ENCODE measurements at regions of chr2 and their contacts with region 1.

Region 1: DNA sequence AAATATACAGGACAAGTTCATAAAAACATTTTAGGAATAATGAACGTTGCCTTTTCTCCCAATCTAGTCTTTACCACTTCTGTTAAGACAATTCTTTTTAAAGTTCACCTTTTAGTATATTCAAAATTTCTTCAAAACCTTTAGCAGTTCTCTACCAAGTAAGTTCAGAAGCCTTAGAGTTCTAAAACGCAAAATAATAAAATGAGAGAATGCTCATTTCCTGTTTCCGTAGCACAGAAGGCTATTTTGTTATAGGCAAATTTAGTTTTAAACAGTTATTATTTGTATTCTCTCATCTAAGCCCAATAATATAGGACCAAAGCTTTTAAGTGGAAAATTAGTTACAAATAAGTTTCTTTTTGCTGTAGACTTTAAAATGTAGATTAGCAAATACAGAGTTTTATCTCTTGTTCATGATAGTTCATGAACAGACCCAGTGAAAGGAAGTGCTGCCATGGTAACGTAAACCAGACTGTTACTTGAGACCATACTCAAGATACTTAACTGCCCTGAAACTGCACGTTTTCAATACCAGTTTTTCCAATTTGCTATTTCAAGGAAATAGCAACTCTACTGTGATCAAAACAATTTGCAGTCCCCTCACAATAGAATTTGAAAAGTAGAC is 173.1 kb upstream of the STON1 start:
- DNase-seq: no peak
- ATAC-seq: peak; percentile 75
- H3K4me3 Mint-ChIP-seq: peak overlapping the region; percentile 55
- H3K27ac Mint-ChIP-seq: peak overlapping the region; percentile 83
- H3K4me1 Mint-ChIP-seq: peaks cover 61% of the 10 kb centered on the region
- H3K27me3 Mint-ChIP-seq: no peaks in the 10 kb centered on the region
- CTCF ChIP-seq: no peak

Region 2: DNA sequence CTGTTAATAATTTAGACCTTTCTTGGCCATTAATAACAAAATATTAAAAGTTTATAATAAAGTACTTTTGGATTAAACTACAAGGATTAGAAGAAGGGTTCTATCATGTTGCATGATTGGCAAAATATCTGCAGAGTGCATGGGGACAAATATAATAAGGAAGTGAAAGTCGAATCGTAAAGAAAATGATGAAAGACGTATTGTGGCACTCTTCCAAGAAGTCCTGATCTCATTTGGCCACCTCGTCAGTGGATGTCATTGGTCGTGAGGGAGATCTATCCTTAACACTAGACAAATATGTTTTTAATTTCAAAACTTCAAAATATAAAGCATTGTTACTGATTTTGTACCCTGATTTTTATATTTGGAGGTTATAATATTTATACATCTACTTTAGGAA is 24.5 kb before region 1 on chr2:
- CTCF ChIA-PET with region 1: no interaction called
- POLR2A ChIA-PET with region 1: no interaction called
- intact Hi-C with region 1: loop called (anchors 2 kb)
- DNase-seq: no peak
- ATAC-seq: peak; percentile 83
- H3K4me3 Mint-ChIP-seq: no peak overlapping the region
- H3K27ac Mint-ChIP-seq: peak overlapping the region; percentile 76
- H3K4me1 Mint-ChIP-seq: peaks cover 51% of the 10 kb centered on the region
- H3K27me3 Mint-ChIP-seq: no peaks in the 10 kb centered on the region
- CTCF ChIP-seq: no peak

Region 3: DNA sequence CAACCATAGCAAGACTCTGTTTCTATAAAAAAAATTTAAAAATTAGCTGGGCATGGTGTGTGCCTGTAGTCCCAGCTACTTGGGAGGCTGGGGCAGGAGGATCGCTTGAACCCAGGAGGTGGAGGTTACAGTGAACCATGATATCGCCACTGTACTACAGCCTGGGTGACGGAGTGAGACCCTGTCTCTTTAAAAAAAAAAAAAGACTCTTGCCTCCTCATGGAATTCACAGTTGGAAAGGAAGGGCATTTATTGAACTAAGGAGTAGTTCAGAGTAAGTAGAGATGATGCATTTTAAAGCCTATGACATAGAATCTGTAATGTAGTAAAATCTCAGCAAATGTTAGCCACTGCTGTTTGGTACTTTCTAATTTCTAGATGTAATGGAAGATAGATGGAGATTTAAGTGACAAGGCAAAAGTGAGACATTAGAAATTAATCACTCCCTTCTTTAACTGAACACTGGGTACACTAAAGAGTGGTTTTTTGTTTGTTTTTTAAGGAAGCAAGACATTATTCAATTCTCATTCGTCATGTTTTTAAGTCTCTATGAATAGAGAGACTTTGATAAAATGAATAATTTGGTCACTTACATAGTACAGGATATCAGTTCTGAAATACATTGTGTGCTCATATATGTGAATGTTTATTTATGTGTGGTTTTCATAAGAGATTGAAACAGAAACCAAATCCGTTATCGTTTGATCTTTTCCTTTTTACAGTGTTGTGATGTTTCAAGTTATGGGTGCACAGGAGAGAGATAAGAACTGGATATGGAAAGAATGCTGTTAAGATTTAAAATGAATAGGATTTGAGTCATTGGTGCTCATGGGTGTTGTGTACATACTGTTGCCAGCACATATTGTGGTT is 13.0 kb before region 1 on chr2:
- CTCF ChIA-PET with region 1: no interaction called
- POLR2A ChIA-PET with region 1: interaction called, 3 read pairs
- intact Hi-C with region 1: loop called (anchors 1 kb)
- DNase-seq: no peak
- ATAC-seq: peak; percentile 50
- H3K4me3 Mint-ChIP-seq: peak overlapping the region; percentile 41
- H3K27ac Mint-ChIP-seq: peak overlapping the region; percentile 9
- H3K4me1 Mint-ChIP-seq: peaks cover 39% of the 10 kb centered on the region
- H3K27me3 Mint-ChIP-seq: no peaks in the 10 kb centered on the region
- CTCF ChIP-seq: no peak

Region 4: GRCh38 chr2:48369971-48370370 is 13.2 kb after region 1 on chr2:
- CTCF ChIA-PET with region 1: no interaction called
- POLR2A ChIA-PET with region 1: no interaction called
- intact Hi-C with region 1: loop called (anchors 2 kb)
- DNase-seq: no peak
- ATAC-seq: no peak
- H3K4me3 Mint-ChIP-seq: no peak overlapping the region
- H3K27ac Mint-ChIP-seq: no peak overlapping the region
- H3K4me1 Mint-ChIP-seq: peaks cover 11% of the 10 kb centered on the region
- H3K27me3 Mint-ChIP-seq: no peaks in the 10 kb centered on the region
- CTCF ChIP-seq: no peak

Region 5: GRCh38 chr2:48398285-48399002 is 41.6 kb after region 1 on chr2:
- CTCF ChIA-PET with region 1: no interaction called
- POLR2A ChIA-PET with region 1: no interaction called
- intact Hi-C with region 1: no loop called
- DNase-seq: no peak
- ATAC-seq: no peak
- H3K4me3 Mint-ChIP-seq: no peak overlapping the region
- H3K27ac Mint-ChIP-seq: no peak overlapping the region
- H3K4me1 Mint-ChIP-seq: peaks cover 4% of the 10 kb centered on the region
- H3K27me3 Mint-ChIP-seq: peaks cover 7% of the 10 kb centered on the region
- CTCF ChIP-seq: no peak

Region 6: DNA sequence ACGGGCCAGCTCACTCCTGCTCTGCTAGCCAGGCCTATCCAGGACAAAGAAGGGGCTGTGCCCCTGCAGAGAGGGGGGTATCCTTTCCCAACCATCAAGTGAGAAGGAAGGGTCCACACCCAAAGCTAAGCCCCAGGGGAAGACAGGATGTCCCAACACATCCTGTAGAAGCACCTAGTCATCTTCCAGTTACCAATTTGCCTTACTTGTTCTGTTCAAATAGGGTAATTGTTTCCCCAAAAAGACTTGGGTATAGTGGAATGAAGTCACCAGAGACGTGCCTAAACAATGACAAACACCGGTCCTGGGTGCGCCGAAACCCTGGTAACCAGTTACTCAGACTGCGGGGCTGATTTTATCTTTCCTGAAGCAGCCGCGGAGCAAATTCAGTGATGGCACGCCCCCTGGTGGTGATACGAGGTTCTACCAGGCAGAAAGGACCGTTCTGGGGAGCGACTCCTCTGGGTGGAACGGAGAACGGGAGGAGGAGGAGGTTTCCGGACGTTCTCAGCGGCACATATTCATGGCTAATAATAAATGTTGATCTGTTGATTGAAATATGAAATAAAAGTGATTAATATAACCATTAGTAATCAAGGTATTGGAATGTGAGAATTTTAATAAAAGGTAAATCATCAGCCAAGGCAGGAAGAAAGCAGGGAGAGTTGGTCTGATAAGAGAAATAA is 63.8 kb after region 1 on chr2:
- CTCF ChIA-PET with region 1: no interaction called
- POLR2A ChIA-PET with region 1: no interaction called
- intact Hi-C with region 1: loop called (anchors 5 kb)
- DNase-seq: peak; percentile 80
- ATAC-seq: peak; percentile 91
- H3K4me3 Mint-ChIP-seq: peak overlapping the region; percentile 4
- H3K27ac Mint-ChIP-seq: no peak overlapping the region
- H3K4me1 Mint-ChIP-seq: peaks cover 14% of the 10 kb centered on the region
- H3K27me3 Mint-ChIP-seq: peaks cover 8% of the 10 kb centered on the region
- CTCF ChIP-seq: peak; percentile 66

Measured in activated B cell treated with CpG ODN at 0.5 μM for 24 hours (primary cell).